CD8-positive, alpha-beta T cell (primary cell): ENCODE measurements at regions of chr1 and their contacts with region 1.

Region 1: DNA sequence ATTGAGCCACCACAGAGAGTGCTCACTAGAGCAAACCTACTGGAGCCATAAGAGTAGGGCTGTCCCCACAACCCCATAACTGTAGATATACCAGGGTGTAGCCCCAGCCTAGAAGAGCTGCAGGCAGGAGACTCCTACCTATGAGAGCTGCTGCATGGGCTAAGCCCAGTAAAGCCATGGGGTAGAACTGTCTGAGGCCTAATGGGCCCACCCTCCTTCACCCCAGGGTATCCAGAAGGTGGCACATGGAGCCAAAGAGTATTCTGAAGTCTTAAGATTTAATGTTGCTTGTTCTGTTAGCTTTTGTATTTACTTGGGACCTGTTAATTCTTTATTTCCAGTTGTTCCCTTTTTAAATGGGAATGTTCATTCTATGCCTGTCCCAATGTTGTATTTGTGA is 1193.7 kb upstream of the ADGRL2 start:
- DNase-seq: no peak
- ATAC-seq: no peak
- H3K4me3 ChIP-seq: no peak overlapping the region
- H3K4me3 Mint-ChIP-seq: no peak overlapping the region
- H3K27ac ChIP-seq: no peak overlapping the region
- H3K27ac Mint-ChIP-seq: no peak overlapping the region
- H3K4me1 ChIP-seq: no peaks in the 10 kb centered on the region
- H3K4me1 Mint-ChIP-seq: no peaks in the 10 kb centered on the region
- H3K27me3 ChIP-seq: no peaks in the 10 kb centered on the region
- H3K27me3 Mint-ChIP-seq: no peaks in the 10 kb centered on the region
- CTCF ChIP-seq: no peak

Region 2: DNA sequence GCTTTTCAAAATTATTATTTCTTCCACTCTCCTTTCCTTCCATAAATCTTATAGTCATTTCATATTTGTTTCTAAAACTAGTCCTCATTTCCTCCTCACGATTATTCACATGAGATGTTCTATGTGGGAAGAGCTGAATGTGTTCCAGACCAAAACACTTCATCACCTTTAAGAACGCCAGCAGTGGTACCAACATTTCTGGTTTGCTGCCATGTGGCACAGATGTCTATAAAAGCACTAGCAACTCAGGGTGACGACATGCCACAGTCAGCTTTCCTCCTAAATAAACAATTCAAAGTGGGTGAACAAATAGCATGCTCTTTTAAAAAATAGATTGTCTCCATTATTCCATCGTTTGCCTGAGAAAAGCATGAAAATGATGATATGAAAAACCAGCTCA is 24.1 kb before region 1 on chr1:
- CTCF ChIA-PET with region 1: no interaction called
- POLR2A ChIA-PET with region 1: no interaction called
- intact Hi-C with region 1: loop called in 1 of 2 experiments (anchors 1 kb)
- DNase-seq: no peak
- ATAC-seq: no peak
- H3K4me3 ChIP-seq: no peak overlapping the region
- H3K4me3 Mint-ChIP-seq: no peak overlapping the region
- H3K27ac ChIP-seq: no peak overlapping the region
- H3K27ac Mint-ChIP-seq: no peak overlapping the region
- H3K4me1 ChIP-seq: no peaks in the 10 kb centered on the region
- H3K4me1 Mint-ChIP-seq: no peaks in the 10 kb centered on the region
- H3K27me3 ChIP-seq: no peaks in the 10 kb centered on the region
- H3K27me3 Mint-ChIP-seq: no peaks in the 10 kb centered on the region
- CTCF ChIP-seq: no peak

Region 3: GRCh38 chr1:80892539-80892938 is 285.5 kb after region 1 on chr1:
- CTCF ChIA-PET with region 1: no interaction called
- POLR2A ChIA-PET with region 1: no interaction called
- intact Hi-C with region 1: no loop called
- DNase-seq: no peak
- ATAC-seq: no peak
- H3K4me3 ChIP-seq: no peak overlapping the region
- H3K4me3 Mint-ChIP-seq: no peak overlapping the region
- H3K27ac ChIP-seq: no peak overlapping the region
- H3K27ac Mint-ChIP-seq: no peak overlapping the region
- H3K4me1 ChIP-seq: no peaks in the 10 kb centered on the region
- H3K4me1 Mint-ChIP-seq: no peaks in the 10 kb centered on the region
- H3K27me3 ChIP-seq: no peaks in the 10 kb centered on the region
- H3K27me3 Mint-ChIP-seq: no peaks in the 10 kb centered on the region
- CTCF ChIP-seq: no peak